Prostate gland (tissue), 2 donors: ENCODE measurements at regions of chr6 and their contacts with region 1.

Region 1: GRCh38 chr6:17584241-17584803 is 15.8 kb upstream of the FAM8A1 start:
- DNase-seq: peak; percentile 55
- H3K4me3 ChIP-seq: no peak overlapping the region
- H3K27ac ChIP-seq: peak overlapping the region; percentile 31 to 50
- H3K4me1 ChIP-seq: no peaks in the 10 kb centered on the region
- H3K27me3 ChIP-seq: no peaks in the 10 kb centered on the region
- CTCF ChIP-seq: peak; percentile 83 to 93 (median 86)
- POLR2A ChIP-seq: no peak

Region 2: DNA sequence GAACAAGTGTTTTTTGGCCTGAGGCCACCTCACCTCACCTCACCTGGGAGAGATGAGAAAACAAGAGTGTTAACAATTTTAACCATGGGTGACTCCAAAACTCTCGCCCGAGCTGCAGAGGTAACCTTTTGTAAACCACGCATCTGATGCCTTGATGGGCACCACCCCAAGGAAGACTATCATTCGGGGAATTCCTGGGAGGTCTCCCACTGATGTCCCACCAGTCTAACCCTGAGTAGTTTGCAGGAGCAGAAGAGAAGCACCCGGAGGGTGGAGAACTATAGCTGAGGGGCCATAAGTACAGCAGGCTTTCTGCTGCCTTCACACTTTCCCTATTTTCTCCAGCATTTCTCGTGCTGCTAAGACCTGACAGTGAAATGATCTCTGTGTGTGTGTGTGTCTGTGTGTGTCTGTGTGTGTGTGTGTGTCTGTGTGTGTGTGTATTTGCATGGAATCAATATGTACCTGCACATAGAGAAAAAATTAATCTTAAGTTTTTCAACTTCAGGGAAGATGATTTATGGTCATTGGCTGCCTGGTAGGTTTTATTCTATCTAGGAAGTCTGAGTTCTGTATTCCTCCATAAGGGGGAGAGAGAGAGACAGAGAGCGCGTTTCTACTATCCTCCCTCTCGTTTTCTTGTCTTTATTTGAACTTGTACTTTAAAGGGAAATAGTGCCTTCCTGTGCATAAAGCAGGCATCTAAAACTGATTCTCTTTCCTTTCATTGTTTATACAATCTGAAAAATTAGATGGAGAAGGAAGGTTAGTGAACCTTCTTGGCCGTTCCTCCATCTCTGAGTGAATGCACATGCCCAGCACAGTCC is 115.1 kb before region 1 on chr6:
- intact Hi-C with region 1: loop called (anchors 2 kb)
- DNase-seq: no peak
- H3K4me3 ChIP-seq: no peak overlapping the region
- H3K27ac ChIP-seq: peak overlapping the region in 1 of 2 donors; percentile 28
- H3K4me1 ChIP-seq: no peaks in the 10 kb centered on the region
- H3K27me3 ChIP-seq: no peaks in the 10 kb centered on the region
- CTCF ChIP-seq: peak in 3 of 4 experiments; percentile 31 to 60 (median 32)
- POLR2A ChIP-seq: no peak

Region 3: DNA sequence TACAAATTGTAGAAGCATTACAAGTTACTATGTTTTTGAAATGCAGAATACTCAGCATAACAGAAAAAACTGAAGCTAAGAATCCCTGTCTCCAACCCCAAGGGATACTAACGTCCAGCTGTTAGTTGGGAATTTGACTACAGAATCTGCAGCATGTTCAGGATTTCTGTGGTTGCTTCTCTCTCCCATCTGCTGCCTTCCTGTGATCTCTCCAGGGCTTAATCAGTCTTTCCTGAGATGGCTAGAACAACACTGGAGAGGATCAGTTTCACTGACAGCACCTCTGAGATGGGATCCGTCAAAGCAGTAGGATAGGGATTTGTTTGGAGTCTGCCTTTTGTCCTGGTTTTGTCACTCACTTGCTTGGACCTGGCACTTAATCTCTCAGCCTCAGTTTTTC is 195.7 kb after region 1 on chr6:
- intact Hi-C with region 1: no loop called
- DNase-seq: no peak
- H3K4me3 ChIP-seq: no peak overlapping the region
- H3K27ac ChIP-seq: no peak overlapping the region
- H3K4me1 ChIP-seq: no peaks in the 10 kb centered on the region
- H3K27me3 ChIP-seq: no peaks in the 10 kb centered on the region
- CTCF ChIP-seq: no peak
- POLR2A ChIP-seq: no peak